ENCODE measurements at regions of chr2 and their contacts with region 1.

Region 1: DNA sequence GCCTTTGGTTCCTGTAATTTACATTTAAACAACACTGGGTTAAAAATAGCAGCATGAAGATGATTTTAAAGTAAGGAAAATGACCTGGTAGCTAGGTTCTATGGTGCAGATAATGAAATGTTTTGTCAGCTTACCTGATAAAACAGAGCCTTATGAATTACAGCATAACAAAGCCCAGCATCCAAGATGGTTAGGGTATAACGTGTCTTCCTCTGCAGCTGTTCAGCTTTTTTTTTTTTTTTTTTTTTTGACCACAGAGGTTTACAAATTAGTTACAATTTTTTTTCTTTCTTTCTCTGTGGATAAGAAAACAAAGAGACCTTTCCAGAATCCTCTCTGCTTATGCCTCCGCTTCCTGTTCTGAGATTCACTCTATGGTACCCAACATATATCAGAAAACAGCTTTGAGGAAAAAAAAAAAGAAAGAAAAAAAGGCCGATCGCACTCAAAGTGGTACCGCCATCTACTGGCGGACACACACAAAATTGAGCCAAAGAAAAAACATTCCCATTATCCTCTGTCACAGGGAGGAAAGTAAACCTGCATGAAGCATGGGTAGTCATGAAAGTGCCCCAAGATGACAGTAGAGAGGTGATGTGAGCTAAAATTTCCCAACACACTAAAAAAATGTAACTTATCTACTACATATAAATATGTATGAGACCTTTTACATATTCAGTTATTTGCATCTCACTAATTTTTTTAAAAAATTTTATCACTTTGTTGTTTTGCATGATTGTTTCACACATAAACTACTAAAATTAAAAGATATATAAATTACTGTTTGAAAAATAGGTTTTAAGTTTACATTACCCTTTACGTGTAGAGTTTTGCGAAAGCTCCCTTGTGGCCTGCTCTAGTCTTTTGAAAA is at the start of gene SCN3A:
- DNase-seq: no peak
- CTCF ChIP-seq: peak; percentile 69

Region 2: DNA sequence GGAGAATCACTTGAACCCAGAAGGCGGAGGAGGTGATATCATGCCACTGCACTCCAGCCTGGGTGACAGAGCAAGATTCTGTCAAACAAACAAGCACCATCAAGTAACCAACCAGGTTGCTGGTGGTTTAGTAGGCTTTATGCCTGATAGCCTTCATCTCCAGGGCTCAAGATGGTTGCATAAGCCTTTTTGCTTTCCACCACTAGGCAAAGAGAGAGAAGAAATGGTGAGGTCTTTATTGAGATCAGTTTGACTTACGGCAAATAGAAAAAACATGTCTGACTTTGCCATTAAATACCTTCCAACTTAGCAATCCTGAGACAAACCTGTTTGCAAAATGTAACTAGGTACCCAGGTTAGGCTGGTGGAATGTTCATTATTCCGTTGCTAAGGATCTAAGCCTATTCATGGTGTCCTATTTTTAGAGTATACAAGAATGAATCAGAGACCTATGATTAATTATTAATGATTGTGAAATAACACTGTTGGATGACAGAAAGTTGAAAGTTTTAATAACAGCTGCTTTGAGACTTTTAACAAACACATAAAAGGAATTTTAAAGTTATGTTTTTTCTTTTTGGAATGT is 195.1 kb before region 1 on chr2:
- in situ Hi-C with region 1: loop called (anchors 10 kb)
- DNase-seq: no peak
- CTCF ChIP-seq: no peak

Measured in GM13976 (cell line).